Activated T-helper 2 cell treated with anti-CD3 and anti-CD28 coated beads, Interferon-gamma antibody, Interleukin-2, Interleukin-4, amounts not matched to agents 10 μg/mL and 5 μg/mL and 100 μg/mL, durations not matched to agents 14 hours and 24 hours and 36 hours (primary cell): ENCODE measurements at regions of chr12 and their contacts with region 1.

Region 1: DNA sequence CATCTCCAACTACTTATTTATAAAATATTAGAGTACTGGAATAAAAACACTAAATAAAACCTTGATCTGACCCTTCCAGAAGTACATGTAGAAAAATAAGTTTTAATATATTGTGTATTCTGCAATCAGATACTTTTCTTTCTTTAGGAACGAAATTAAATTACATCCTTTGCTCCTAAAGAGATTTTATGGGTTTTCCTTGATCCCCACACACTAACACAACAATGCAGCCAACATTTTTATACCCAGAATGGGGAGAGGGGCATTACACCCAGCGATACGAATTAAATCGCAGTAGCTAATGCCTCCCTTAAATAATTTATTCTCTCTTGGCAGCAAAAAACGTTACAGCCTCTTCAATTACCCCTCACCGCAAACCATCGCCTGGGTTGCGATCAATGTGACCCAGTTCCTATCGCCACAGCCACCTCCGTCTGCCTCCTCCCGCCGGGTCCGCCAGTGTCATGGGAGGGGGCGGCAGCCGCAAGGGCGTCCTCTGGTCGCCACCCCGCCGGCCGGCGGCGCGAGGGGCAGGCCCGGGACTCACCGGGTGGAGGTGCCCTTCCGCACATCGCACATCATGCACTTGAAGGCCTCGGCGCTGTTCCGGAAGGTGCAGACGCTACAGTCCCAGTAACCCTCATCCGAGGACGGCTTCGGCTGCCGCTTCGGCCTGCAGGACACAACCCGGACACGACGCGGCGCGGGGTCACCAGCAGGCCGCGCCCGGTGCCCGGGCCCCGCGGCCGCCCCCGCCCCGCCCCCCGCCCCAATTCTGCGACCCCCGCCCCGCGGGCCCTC is 796 bp downstream of the YAF2 start:
- DNase-seq: peak; percentile 67
- H3K4me3 Mint-ChIP-seq: peak overlapping the region; percentile 94
- H3K27ac Mint-ChIP-seq: peak overlapping the region; percentile 78
- H3K4me1 Mint-ChIP-seq: peaks cover 38% of the 10 kb centered on the region
- H3K27me3 Mint-ChIP-seq: no peaks in the 10 kb centered on the region

Region 2: DNA sequence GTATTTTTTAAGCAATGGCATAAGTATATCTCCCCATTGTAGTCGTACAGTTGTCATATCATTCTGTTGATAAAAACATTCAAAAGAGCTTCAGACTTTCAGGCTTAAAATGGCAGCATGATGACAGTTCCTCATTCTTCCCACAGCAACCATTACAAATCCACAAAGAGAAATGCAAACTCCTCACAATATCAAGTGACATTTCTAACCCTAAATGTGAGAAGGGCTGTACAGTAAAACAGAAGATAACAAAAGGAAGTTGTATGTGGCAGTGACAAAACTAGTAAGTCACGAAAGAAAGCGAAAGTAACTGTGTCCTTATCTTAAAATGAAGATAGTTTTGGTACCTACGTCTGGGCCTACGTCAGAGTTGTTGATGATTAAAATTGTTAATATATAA is 139.3 kb before region 1 on chr12:
- intact Hi-C with region 1: loop called (anchors 2 kb)
- DNase-seq: no peak
- H3K4me3 Mint-ChIP-seq: peak overlapping the region; percentile 81
- H3K27ac Mint-ChIP-seq: peak overlapping the region; percentile 91
- H3K4me1 Mint-ChIP-seq: peaks cover 31% of the 10 kb centered on the region
- H3K27me3 Mint-ChIP-seq: no peaks in the 10 kb centered on the region

Region 3: GRCh38 chr12:42144408-42145196 is 92.7 kb before region 1 on chr12 and contains the start of gene GXYLT1:
- intact Hi-C with region 1: loop called (anchors 1 kb)
- DNase-seq: peak; percentile 77
- H3K4me3 Mint-ChIP-seq: peak within 1 kb of the TSS; percentile 92
- H3K27ac Mint-ChIP-seq: peak within 1 kb of the TSS; percentile 79
- H3K4me1 Mint-ChIP-seq: peaks cover 32% of the 10 kb centered on the region
- H3K27me3 Mint-ChIP-seq: peaks cover 7% of the 10 kb centered on the region
- total RNA-seq, gene GXYLT1: 9.8 and 11.0 TPM in 2 replicates

Region 4: GRCh38 chr12:42261708-42262107 is 24.5 kb after region 1 on chr12:
- intact Hi-C with region 1: loop called (anchors 2 kb)
- DNase-seq: no peak
- H3K4me3 Mint-ChIP-seq: no peak overlapping the region
- H3K27ac Mint-ChIP-seq: no peak overlapping the region
- H3K4me1 Mint-ChIP-seq: peaks cover 16% of the 10 kb centered on the region
- H3K27me3 Mint-ChIP-seq: peaks cover 3% of the 10 kb centered on the region

Region 5: GRCh38 chr12:42396473-42397259 is 159.4 kb after region 1 on chr12:
- intact Hi-C with region 1: no loop called
- DNase-seq: no peak
- H3K4me3 Mint-ChIP-seq: no peak overlapping the region
- H3K27ac Mint-ChIP-seq: no peak overlapping the region
- H3K4me1 Mint-ChIP-seq: peaks cover 4% of the 10 kb centered on the region
- H3K27me3 Mint-ChIP-seq: no peaks in the 10 kb centered on the region